Esophagus squamous epithelium (tissue), 5 donors: ENCODE measurements at regions of chr20 and their contacts with region 1.

Region 1: GRCh38 chr20:9616833-9617489 is 102.6 kb downstream of the LAMP5 start:
- DNase-seq: no peak
- H3K4me3 ChIP-seq: no peak overlapping the region
- H3K27ac ChIP-seq: no peak overlapping the region
- H3K4me1 ChIP-seq: peaks cover 0 to 9% (median 0%) of the 10 kb centered on the region in 3 donors
- H3K27me3 ChIP-seq: peaks cover 0 to 5% (median 0%) of the 10 kb centered on the region in 4 donors
- CTCF ChIP-seq: peak; percentile 40 to 86 (median 76)
- POLR2A ChIP-seq: no peak

Region 2: DNA sequence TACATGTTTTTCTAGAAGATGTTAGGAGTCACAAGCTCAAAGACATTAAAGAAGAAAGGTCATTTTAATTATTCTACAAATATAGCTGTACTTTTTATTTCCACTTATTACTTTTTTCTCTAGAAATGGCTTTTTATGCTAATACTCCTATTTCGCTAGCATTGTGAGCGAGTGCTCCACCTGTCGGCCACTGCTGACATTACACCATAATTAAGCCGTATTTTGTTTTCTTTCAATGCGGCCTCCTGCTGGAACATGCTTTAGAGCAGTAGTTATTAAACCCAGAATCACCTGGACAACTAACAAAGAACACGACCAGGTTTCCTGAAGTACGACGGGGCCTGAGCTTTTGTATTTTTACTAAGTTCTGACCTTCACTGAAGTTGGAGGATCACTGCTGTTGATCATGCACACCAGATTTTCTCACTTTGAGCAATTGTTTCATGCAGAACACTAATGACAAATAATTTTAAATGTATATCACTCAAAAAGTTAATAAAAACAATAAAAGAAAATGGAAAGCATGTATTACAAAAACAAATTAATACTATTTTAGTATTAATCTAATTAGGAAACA is 296.0 kb after region 1 on chr20:
- intact Hi-C with region 1: loop called (anchors 10 kb)
- DNase-seq: no peak
- H3K4me3 ChIP-seq: no peak overlapping the region
- H3K27ac ChIP-seq: no peak overlapping the region
- H3K4me1 ChIP-seq: no peaks in the 10 kb centered on the region
- H3K27me3 ChIP-seq: peaks cover 0 to 12% (median 0%) of the 10 kb centered on the region in 4 donors
- CTCF ChIP-seq: peak; percentile 61 to 82 (median 72)
- POLR2A ChIP-seq: no peak

Region 3: DNA sequence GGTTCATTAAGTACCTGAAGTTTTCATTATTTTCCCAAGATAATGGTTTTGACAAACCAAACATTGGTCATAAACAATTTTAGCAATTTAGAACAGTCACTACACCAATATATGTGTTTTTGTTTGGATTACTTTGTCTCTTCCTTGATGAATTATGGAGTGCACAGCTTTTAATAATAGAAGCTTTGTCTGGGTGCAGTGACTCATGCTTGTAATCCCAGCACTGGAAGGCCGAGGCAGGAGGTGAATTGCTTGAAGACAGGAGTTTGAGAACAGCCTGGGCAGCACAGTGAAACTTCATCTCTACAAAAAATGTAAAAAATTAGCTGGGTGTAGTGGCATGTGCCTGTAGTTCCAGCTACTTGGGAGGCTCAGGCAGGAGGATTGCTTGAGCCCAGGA is 328.4 kb after region 1 on chr20:
- intact Hi-C with region 1: no loop called
- DNase-seq: no peak
- H3K4me3 ChIP-seq: no peak overlapping the region
- H3K27ac ChIP-seq: no peak overlapping the region
- H3K4me1 ChIP-seq: peaks cover 0 to 12% (median 0%) of the 10 kb centered on the region in 3 donors
- H3K27me3 ChIP-seq: no peaks in the 10 kb centered on the region
- CTCF ChIP-seq: no peak
- POLR2A ChIP-seq: no peak

Region 4: DNA sequence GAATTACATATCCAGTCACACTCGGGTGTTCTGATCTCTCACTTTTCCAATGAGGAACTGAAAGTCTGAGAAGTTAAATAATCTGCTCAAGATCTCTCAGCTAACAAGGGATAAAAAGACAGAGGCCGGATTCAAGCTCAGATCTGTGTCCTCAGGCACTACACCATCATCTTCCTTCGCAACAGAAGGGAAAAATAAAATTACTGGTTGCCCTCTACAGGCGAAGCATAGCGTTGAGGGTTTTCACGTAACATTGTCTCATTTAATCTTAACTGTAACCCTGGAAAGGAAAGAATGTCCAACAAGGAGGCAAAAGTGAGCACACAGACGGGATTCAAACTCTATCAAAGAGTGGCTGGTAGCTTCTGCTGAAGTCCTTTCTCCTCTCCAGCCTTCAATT is 350.0 kb after region 1 on chr20:
- intact Hi-C with region 1: loop called (anchors 5 kb)
- DNase-seq: no peak
- H3K4me3 ChIP-seq: no peak overlapping the region
- H3K27ac ChIP-seq: no peak overlapping the region
- H3K4me1 ChIP-seq: peaks cover 0 to 6% (median 0%) of the 10 kb centered on the region in 3 donors
- H3K27me3 ChIP-seq: peaks cover 0 to 8% (median 0%) of the 10 kb centered on the region in 4 donors
- CTCF ChIP-seq: peak in 3 of 6 experiments; percentile 12 to 48 (median 15)
- POLR2A ChIP-seq: no peak

Region 5: GRCh38 chr20:10090588-10091166 is 473.7 kb after region 1 on chr20:
- intact Hi-C with region 1: loop called (anchors 10 kb)
- DNase-seq: no peak
- H3K4me3 ChIP-seq: no peak overlapping the region
- H3K27ac ChIP-seq: no peak overlapping the region
- H3K4me1 ChIP-seq: peaks cover 0 to 5% (median 0%) of the 10 kb centered on the region in 3 donors
- H3K27me3 ChIP-seq: peaks cover 0 to 3% (median 0%) of the 10 kb centered on the region in 4 donors
- CTCF ChIP-seq: peak; percentile 39 to 82 (median 68)
- POLR2A ChIP-seq: no peak